ENCODE measurements at regions of chr1 and their contacts with region 1.

Region 1: DNA sequence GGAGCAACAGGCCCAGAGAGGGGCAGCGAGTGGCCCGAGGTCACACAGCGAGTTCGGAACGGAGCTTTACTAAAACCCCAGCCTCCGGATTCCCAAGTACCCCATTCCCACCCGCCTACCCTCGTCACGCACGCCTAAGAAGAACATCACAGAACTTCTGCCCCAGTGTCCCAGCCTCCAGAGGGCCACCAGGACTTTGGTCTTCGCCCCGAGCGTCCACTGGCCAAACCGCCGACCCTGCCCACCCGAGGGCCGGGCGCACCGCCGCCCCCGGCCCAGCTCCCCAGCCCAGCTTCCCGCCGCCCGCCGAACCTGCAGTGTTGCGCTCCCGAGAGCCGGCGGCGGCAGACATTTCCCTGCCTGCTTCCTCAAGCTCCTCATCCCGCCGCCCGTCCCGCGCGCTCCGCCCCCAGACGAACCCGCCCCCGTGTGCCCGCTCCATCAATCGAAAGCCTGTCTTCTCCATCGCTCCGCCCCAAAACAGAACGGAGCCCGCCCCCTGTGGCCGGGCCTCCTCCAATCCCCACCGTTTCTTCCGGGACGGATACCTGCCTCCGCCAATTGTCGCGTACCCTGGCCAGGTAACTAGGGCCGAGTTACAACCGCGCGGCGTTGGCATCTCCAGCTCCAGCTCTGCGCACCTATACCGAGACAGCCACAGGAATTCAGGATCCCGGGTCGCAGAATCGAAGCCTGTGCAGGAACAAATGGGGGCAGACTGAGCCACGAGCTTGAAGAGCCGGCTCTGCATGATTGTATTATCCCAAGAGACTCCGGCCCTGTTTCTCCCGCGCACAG is 15.3 kb downstream of the INPP5B start:
- DNase-seq: peak; percentile 98

Region 2: GRCh38 chr1:37859507-37860345 is 71.8 kb before region 1 on chr1 and contains the start of gene MTF1:
- intact Hi-C with region 1: loop called (anchors 5 kb)
- DNase-seq: peak; percentile 99
- total RNA-seq, gene MTF1: 16.0 TPM

Region 3: DNA sequence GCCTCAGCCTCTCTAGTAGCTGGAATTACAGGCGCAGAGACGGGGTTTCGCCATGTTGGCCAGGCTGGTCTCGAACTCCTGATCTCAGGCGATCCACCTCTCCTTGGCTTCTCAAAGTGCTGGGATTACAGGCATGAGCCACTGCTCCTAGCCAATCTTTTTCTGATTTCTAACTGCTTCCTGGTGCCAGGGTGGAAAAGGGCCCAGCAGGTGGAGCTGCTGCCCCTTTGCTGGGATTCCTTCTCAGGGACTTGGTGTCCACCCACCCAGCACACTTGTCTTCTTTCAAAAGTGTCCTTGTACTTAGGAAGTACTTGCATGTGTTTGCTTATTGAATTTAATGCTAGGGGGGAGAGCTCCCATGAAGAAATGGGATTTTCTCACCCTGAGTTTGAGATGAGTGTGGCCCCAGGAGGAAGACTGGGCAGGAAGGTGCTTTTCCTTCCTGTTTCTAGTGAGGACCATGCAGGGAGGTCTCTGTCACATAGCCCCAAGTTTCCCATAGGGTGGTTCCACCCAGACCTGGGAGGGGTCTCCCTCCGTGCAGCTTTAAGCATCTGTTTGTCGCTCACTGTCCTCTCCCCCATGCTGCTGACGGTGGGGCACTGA is 95.1 kb after region 1 on chr1:
- intact Hi-C with region 1: no loop called
- DNase-seq: peak; percentile 58

Region 4: GRCh38 chr1:38433084-38433722 is 501.6 kb after region 1 on chr1:
- intact Hi-C with region 1: no loop called
- DNase-seq: no peak